Astrocyte of the cerebellum (primary cell): ENCODE measurements at regions of chr10 and their contacts with region 1.

Region 1: DNA sequence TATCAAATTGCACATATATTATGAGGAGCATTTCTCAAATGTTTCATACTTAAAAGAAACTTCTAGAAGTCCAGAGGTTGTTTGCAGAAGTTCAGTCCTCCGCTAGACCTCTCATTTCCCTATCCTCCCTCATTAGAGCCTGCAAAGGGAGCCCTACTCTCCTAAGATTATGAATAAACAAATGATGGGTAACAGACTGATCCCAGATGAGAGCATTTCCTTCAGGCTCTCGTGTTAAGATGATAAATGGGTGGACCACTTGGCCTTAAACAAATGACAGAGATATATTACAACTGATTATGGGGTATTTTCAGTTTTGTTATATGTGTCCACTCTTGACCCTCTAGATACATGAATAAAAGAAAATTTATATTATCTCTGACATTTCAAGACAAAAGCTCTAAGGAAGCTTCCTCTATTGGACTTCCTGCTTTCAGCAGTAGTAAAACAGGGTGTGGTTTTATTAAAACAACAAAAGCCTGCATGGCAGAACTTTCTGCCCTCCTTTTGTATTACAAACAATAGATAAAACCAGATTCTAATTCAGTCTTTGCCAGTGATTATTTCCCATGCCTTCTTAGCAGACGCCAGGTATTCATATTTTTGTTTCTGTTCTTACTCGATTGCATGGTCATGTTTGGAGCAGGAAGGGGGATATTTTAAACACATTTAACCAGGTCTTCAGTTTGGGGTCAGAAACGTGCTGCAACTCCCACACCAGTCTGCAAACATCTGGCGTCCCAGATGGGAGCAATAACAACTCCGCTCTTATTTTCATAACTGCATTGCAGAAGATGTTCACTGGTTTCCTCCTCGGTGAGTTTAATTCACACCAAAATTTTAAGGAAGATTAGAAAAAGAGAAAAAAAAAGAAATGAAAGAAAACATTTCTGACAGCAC is 52.4 kb upstream of the FAM204A start:
- DNase-seq: no peak
- H3K4me3 ChIP-seq: no peak overlapping the region
- CTCF ChIP-seq: no peak

Region 2: GRCh38 chr10:118362103-118362502 is 32.4 kb before region 1 on chr10:
- in situ Hi-C with region 1: no loop called
- DNase-seq: no peak
- H3K4me3 ChIP-seq: no peak overlapping the region
- CTCF ChIP-seq: no peak

Region 3: GRCh38 chr10:118439824-118440223 is 45.3 kb after region 1 on chr10:
- in situ Hi-C with region 1: loop called (anchors 5 kb)
- DNase-seq: no peak
- H3K4me3 ChIP-seq: no peak overlapping the region
- CTCF ChIP-seq: no peak